Posterior vena cava (tissue), 2 donors: ENCODE measurements at regions of chrX and their contacts with region 1.

Region 1: DNA sequence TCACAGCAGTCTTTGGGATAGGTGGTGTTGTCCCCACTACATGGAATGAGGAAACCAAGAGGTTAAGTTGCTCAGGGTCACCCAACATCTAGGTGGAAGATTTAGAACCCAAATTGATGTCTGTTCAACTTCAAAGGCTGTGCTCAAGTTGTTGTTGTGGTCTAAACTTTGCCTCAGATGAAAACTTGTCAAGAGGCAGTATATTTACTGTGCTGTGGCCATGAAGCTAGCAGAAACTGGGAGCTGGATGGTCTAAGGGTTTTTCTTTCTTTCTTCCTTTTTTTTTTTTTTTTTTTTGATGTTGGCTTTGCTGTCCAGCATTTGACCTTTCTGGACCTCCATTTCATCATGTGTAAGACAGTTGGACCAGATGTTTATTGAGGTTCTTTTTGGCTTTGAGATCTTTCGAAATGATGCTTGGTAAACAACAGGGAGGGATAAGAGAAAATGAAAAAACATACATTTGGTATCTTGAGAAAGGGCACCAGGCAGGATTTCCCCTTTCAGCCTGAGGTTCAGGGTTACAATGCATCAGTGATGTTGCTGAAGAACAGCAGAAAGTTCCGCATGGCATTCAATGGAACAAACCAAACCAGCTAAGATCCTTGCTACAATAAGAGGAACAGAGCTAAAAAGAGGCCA is 166.2 kb upstream of the RPS6KA3 start:
- DNase-seq: no peak

Region 2: GRCh38 chrX:18873189-18873791 is 1559.6 kb before region 1 on chrX:
- intact Hi-C with region 1: loop called in 1 of 2 experiments (anchors 5 kb)
- DNase-seq: peak; percentile 65